Tibial artery (tissue), 4 donors: ENCODE measurements at regions of chr12 and their contacts with region 1.

Region 1: DNA sequence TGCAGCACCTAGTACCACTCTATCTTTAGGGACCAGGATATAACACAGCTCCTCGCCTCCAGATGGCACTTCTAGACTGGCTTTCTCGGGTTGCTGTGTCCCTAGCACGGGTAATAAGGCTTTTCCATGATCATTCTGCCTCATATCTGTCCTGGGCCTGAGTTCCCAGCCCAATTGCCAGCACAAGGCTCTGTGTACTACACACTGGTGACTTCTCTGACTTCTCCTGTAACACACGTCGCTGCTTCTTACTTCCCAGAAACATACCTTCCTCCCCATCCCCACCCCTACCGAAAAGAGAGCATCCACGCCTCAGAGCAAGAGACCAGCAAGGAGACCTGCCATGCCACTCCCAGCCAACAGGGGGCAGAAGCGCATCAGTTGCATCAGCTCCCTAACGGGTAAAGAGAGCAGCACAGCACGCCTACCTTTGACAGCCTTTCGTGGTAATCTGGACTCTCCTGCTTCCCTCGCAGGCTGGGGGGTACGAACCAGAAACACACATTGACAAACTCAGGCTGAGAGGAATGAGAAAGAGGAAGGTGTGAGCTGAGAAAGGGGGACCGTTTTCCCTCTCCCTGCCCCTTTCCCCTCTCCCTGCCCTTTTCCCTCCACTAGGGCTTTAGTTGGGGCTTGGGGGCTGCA is 21.2 kb upstream of the ZNF740 start:
- DNase-seq: peak; percentile 90 to 93
- H3K4me3 ChIP-seq: no peak overlapping the region
- H3K27ac ChIP-seq: peak overlapping the region; percentile 84 to 90
- H3K4me1 ChIP-seq: peaks cover 0 to 56% (median 37%) of the 10 kb centered on the region in 4 donors
- H3K27me3 ChIP-seq: no peaks in the 10 kb centered on the region
- CTCF ChIP-seq: peak; percentile 95 to 97

Region 2: GRCh38 chr12:53079226-53080117 is 79.8 kb before region 1 on chr12 and contains the start of gene SPRYD3:
- intact Hi-C with region 1: loop called (anchors 5 kb)
- DNase-seq: peak; percentile 99
- H3K4me3 ChIP-seq: peak within 1 kb of the TSS; percentile 67 to 83
- H3K27ac ChIP-seq: peak within 1 kb of the TSS; percentile 94 to 99
- H3K4me1 ChIP-seq: peaks cover 0 to 48% (median 33%) of the 10 kb centered on the region in 4 donors
- H3K27me3 ChIP-seq: no peaks in the 10 kb centered on the region
- CTCF ChIP-seq: no peak

Region 3: GRCh38 chr12:53198486-53199110 is 39.3 kb after region 1 on chr12:
- intact Hi-C with region 1: loop called (anchors 5 kb)
- DNase-seq: no peak
- H3K4me3 ChIP-seq: no peak overlapping the region
- H3K27ac ChIP-seq: no peak overlapping the region
- H3K4me1 ChIP-seq: peaks cover 0 to 12% (median 10%) of the 10 kb centered on the region in 4 donors
- H3K27me3 ChIP-seq: no peaks in the 10 kb centered on the region
- CTCF ChIP-seq: no peak